ENCODE measurements at regions of chr9 and their contacts with region 1.

Region 1: GRCh38 chr9:12884737-12885414 is 110.1 kb downstream of the LURAP1L start:
- DNase-seq: peak in 2 of 5 donors; percentile 45 to 53
- H3K4me3 ChIP-seq: no peak overlapping the region
- H3K27ac ChIP-seq: no peak overlapping the region
- H3K4me1 ChIP-seq: no peaks in the 10 kb centered on the region
- H3K27me3 ChIP-seq: no peaks in the 10 kb centered on the region
- CTCF ChIP-seq: peak; percentile 45

Region 2: GRCh38 chr9:12723409-12724028 is 161.4 kb before region 1 on chr9:
- intact Hi-C with region 1: loop called (anchors 5 kb)
- DNase-seq: peak in 1 of 5 donors; percentile 19
- H3K4me3 ChIP-seq: no peak overlapping the region
- H3K27ac ChIP-seq: no peak overlapping the region
- H3K4me1 ChIP-seq: no peaks in the 10 kb centered on the region
- H3K27me3 ChIP-seq: no peaks in the 10 kb centered on the region
- CTCF ChIP-seq: peak; percentile 34

Measured in kidney (tissue), 22 donors.